ENCODE measurements at regions of chr3 and their contacts with region 1.

Region 1: GRCh38 chr3:16871915-16872842 is 12.6 kb upstream of the PLCL2 start:
- DNase-seq: no peak

Region 2: DNA sequence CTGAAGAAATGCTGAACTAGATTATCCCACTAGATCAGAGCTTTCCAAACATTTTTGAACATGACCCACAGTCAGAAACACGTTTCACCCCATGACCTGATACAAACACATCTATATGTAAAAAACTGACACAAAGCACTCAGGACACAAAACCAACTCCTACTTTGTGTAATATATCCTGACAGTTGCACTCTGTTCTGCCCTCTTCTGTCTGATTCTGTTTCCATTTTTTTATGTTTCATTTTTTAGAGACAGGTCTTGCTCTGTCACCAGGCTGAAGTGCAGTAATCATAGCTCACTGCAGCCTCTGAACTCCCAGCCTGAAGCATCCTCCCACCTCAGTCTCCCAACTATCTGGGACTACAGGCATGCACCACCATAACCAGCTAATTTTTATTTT is 342.9 kb before region 1 on chr3:
- CTCF ChIA-PET with region 1: no interaction called
- POLR2A ChIA-PET with region 1: no interaction called
- DNase-seq: no peak

Region 3: GRCh38 chr3:16884084-16884747 is 12.0 kb after region 1 on chr3:
- CTCF ChIA-PET with region 1: interaction called, 10 read pairs
- POLR2A ChIA-PET with region 1: interaction called, 9 read pairs
- DNase-seq: peak; percentile 89

Region 4: DNA sequence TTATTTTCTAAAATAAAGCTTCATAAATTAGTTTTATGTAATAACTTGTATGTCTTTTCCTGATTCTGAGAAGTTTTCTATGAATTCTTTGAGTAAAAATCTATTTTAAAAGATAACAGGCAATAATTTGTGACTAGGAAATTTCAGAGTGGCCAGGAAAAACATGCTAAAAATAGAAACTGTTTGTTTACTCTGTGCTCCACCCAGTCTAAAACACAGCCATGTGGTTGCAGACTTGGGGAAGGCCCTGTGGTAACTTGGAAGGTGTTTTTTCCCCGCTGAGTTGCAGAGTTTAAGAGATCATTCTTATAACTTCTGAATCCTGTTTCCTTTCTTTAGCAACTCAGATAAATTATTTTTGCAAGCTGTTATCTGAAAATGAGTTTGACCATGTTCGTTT is 34.5 kb after region 1 on chr3:
- CTCF ChIA-PET with region 1: no interaction called
- POLR2A ChIA-PET with region 1: no interaction called
- DNase-seq: no peak